MCF 10A (cell line): ENCODE measurements at regions of chr22 and their contacts with region 1.

Region 1: DNA sequence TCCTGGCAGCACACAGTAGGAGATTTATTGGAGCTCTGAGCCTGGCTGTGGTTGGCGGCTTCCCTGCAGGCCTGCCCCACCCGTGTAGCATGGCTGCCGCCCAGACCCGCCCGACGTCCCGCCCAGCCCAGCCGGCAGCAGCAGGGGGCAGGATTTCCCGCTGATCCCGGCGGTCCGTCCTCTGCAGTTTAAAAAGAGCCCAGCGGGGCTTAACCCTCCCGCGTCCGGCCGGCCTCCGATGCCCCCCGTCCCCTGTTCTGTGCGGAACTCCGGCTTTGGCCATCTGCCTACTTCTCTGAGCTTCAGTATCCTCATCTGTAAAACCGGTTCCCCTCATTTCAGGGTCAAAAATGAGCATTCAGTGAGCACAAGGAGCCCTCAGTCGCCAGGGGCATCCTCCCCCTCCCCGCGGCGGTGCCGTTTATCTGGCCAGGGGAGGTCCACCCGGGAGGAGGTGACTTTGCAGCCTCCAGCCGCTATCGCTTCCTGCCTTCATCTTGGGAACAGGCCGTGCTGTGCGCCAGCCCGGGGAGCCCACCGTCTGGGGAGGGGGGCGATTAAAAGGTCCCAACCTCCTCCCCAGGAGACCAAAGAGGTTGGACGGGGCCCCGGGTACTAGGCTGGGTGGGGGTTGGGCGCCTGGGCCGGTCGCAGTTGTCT is at the start of gene GAS2L1:
- DNase-seq: peak; percentile 81
- H3K4me3 Mint-ChIP-seq: peak within 1 kb of the TSS; percentile 88
- H3K27ac Mint-ChIP-seq: no peak within 1 kb of the TSS
- H3K4me1 Mint-ChIP-seq: peaks cover 18% of the 10 kb centered on the region
- H3K27me3 Mint-ChIP-seq: no peaks in the 10 kb centered on the region
- CTCF ChIP-seq: peak; percentile 57
- total RNA-seq, gene GAS2L1: 15.3 and 17.2 TPM in 2 replicates

Region 2: GRCh38 chr22:29202212-29203192 is 103.8 kb before region 1 on chr22:
- CTCF ChIA-PET with region 1: no interaction called
- POLR2A ChIA-PET with region 1: no interaction called
- intact Hi-C with region 1: no loop called
- DNase-seq: peak; percentile 21
- H3K4me3 Mint-ChIP-seq: no peak overlapping the region
- H3K27ac Mint-ChIP-seq: no peak overlapping the region
- H3K4me1 Mint-ChIP-seq: peaks cover 6% of the 10 kb centered on the region
- H3K27me3 Mint-ChIP-seq: peaks cover 11% of the 10 kb centered on the region
- CTCF ChIP-seq: peak; percentile 12

Region 3: DNA sequence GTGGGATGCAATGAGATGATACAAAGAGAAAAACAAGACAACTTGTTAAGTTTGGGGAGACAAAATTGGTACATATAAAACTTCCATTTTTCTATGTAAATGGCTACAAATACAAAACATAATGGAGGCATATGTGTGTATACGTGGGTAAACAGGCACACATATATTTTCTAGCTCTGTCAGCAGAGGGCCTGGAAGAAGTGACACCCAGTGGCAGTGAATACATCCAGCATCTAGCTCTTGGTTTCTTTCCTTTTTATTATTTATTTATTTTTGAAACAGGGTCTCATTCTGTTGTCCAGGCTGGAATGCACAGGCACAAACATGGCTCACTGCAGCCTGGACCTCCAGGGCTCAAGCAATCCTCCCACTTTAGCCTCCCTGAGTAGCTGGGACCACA is 14.2 kb after region 1 on chr22:
- CTCF ChIA-PET with region 1: interaction called, 4 read pairs
- POLR2A ChIA-PET with region 1: interaction called, 10 read pairs
- intact Hi-C with region 1: no loop called
- DNase-seq: no peak
- H3K4me3 Mint-ChIP-seq: no peak overlapping the region
- H3K27ac Mint-ChIP-seq: no peak overlapping the region
- H3K4me1 Mint-ChIP-seq: no peaks in the 10 kb centered on the region
- H3K27me3 Mint-ChIP-seq: peaks cover 12% of the 10 kb centered on the region
- CTCF ChIP-seq: no peak

Region 4: DNA sequence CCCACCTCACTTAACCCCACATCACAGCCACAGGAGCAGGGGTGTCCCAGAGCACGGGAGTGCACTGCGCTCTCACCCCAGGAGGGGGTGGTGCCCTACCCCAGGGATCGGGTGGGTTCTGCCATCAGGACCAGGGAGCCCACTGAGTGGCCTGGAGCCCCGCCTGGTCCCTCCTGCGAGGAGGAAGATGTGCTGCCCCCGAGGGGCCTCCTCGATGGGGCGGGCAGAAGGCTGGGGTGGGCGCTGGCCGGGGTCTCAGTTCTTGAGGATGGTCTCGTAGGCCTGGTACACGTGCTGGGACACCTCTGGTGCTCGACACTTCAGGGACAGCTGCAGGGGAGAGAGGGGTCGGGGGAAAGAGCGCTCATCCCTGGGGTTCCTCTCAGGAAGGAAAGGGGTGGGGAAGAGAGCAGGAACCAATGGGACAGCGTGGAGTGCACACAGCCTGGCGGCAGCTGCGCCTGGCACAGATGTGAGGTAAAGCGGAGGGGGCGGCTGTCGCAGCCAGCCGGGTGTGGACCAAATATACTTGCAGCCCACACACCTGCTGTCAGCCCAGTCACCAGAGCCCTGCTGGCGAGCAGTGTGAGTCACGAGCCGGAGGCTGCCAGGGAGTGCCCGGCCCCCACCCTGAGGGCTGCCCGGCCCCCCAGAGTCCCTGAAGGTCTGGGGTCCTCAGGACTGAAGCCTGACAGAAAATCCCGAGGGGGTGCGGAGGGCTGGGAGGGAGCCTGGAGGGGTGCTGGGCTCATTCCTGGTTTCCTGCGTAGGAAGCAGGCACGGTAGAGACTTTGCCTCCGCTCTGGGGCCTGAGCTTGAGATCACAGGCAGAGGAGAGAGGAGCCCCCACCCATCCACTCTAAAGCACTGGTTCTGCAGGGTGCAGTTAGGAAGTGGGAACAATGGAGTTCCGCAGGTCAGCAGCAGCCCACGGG is 22.5 kb after region 1 on chr22:
- CTCF ChIA-PET with region 1: no interaction called
- POLR2A ChIA-PET with region 1: interaction called, 11 read pairs
- intact Hi-C with region 1: no loop called
- DNase-seq: no peak
- H3K4me3 Mint-ChIP-seq: no peak overlapping the region
- H3K27ac Mint-ChIP-seq: no peak overlapping the region
- H3K4me1 Mint-ChIP-seq: peaks cover 5% of the 10 kb centered on the region
- H3K27me3 Mint-ChIP-seq: no peaks in the 10 kb centered on the region
- CTCF ChIP-seq: no peak

Region 5: GRCh38 chr22:29344137-29344536 is 37.8 kb after region 1 on chr22:
- CTCF ChIA-PET with region 1: interaction called, 3 read pairs
- POLR2A ChIA-PET with region 1: interaction called, 4 read pairs
- intact Hi-C with region 1: loop called (anchors 1 kb)
- DNase-seq: peak; percentile 85
- H3K4me3 Mint-ChIP-seq: no peak overlapping the region
- H3K27ac Mint-ChIP-seq: no peak overlapping the region
- H3K4me1 Mint-ChIP-seq: peaks cover 30% of the 10 kb centered on the region
- H3K27me3 Mint-ChIP-seq: no peaks in the 10 kb centered on the region
- CTCF ChIP-seq: no peak

Region 6: GRCh38 chr22:29359469-29359868 is 53.2 kb after region 1 on chr22:
- CTCF ChIA-PET with region 1: interaction called, 4 read pairs
- POLR2A ChIA-PET with region 1: interaction called, 4 read pairs
- intact Hi-C with region 1: loop called (anchors 1 kb)
- DNase-seq: peak; percentile 63
- H3K4me3 Mint-ChIP-seq: no peak overlapping the region
- H3K27ac Mint-ChIP-seq: no peak overlapping the region
- H3K4me1 Mint-ChIP-seq: no peaks in the 10 kb centered on the region
- H3K27me3 Mint-ChIP-seq: no peaks in the 10 kb centered on the region
- CTCF ChIP-seq: peak; percentile 29

Region 7: GRCh38 chr22:29387921-29388758 is 81.8 kb after region 1 on chr22 and contains the start of gene AP1B1:
- CTCF ChIA-PET with region 1: no interaction called
- POLR2A ChIA-PET with region 1: interaction called, 9 read pairs
- intact Hi-C with region 1: loop called (anchors 10 kb)
- DNase-seq: peak; percentile 93
- H3K4me3 Mint-ChIP-seq: peak within 1 kb of the TSS; percentile 92
- H3K27ac Mint-ChIP-seq: peak within 1 kb of the TSS; percentile 91
- H3K4me1 Mint-ChIP-seq: peaks cover 13% of the 10 kb centered on the region
- H3K27me3 Mint-ChIP-seq: no peaks in the 10 kb centered on the region
- CTCF ChIP-seq: no peak
- total RNA-seq, gene AP1B1: 67.3 and 69.5 TPM in 2 replicates